GM18951 (cell line): ENCODE measurements at regions of chr5 and their contacts with region 1.

Region 1: DNA sequence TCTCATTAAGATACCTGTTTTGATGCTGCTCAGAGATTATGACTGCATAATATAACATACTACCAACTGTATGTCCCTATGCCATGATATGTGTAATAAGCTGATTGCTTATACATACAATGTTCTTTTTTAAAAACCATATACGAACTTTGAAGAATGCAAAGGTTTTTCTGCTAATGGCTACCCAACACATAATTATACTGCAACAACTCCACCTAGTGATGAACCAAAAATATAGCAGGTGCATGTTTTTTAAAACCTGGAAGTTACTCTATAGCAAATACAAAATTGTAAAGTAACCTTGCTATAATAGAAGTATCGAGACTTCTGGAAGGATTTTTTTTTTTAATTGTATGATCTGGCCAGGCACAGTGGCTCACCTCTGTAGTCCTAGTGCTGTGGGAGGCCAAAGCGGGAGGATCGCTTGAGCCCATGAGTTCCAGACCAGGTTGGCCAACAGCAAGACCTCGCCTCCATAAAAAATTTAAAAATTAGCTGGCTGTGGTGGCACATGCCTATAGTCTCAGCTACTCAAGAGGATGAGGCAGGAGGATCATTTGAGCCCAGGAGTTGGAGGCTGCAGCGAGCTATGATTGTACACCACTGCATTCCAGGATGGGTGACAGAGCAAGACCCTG is 49.1 kb downstream of the HOMER1 start:
- POLR2A ChIP-seq: no peak

Region 2: GRCh38 chr5:79020861-79021561 is 443.8 kb before region 1 on chr5:
- in situ Hi-C with region 1: loop called (anchors 25 kb)
- POLR2A ChIP-seq: no peak

Region 3: GRCh38 chr5:79133657-79134451 is 331.0 kb before region 1 on chr5:
- in situ Hi-C with region 1: loop called (anchors 25 kb)
- POLR2A ChIP-seq: no peak

Region 4: GRCh38 chr5:79612667-79613198 is 147.9 kb after region 1 on chr5:
- in situ Hi-C with region 1: no loop called
- POLR2A ChIP-seq: no peak

Region 5: DNA sequence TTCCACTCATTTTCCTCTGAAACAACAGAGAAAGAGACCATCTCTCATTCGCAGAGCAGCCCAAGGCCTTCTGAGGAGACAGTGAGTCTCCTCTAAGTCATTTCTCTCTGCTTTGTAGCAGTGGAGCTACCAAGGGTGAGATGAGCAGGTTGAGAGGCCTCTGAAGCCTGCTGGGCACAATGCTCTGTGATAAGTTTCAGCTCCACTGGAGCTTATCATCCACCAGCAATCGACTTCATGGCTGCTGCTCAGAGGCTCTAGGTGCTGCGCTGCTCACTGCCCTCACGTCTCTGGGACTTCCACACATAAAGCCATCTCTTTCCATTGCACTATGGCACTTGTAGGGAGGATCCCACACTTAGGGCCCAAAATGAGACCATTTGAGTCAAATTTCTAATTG is 321.2 kb after region 1 on chr5:
- in situ Hi-C with region 1: no loop called
- POLR2A ChIP-seq: no peak